ENCODE measurements at regions of chr3 and their contacts with region 1.

Region 1: GRCh38 chr3:142993958-142994442 is 7.4 kb upstream of the U2SURP start:
- DNase-seq: peak; percentile 69 to 78
- ATAC-seq: peak; percentile 54 to 90; a peak in 5 of 6 replicates
- H3K4me3 ChIP-seq: no peak overlapping the region
- H3K27ac ChIP-seq: no peak overlapping the region
- H3K4me1 ChIP-seq: peaks cover 10% of the 10 kb centered on the region; the same call in 2 of the 3 replicates
- CTCF ChIP-seq: peak; percentile 95
- EP300 ChIP-seq: no peak
- POLR2A ChIP-seq: no peak
- RAD21 ChIP-seq: peak; percentile 93 to 94

Region 2: DNA sequence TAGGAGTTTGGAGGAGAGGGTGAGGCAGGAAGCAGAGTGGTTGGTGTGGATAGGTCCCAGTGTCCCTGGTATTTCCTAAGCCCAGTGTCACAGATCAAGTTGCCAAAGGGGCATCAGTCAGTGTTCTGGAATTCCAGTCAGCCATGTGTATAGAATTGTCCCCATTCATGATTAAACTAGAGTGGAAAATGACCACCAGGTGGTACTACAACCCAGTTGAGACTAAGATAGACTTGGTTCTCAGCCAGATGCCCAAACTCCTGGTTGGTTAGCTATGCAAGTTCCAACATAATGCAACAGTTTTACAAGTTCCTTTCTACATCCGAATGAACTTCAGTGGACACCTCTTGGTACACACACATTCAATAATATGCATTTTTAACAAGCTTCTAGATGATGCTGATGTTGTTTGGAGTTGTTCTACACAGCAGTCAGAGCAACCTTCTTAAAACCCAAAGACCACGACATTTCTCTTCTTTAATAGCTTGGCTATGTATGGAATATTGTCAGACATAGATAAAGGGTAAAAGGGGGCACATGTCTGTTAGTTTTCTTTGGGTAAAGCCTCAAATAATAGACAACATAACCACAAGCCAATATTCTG is 407.1 kb before region 1 on chr3:
- CTCF ChIA-PET with region 1: interaction called, 20 read pairs
- POLR2A ChIA-PET with region 1: no interaction called
- DNase-seq: peak; percentile 84
- ATAC-seq: peak; percentile 95 to 96
- H3K4me3 ChIP-seq: no peak overlapping the region
- H3K27ac ChIP-seq: no peak overlapping the region
- H3K4me1 ChIP-seq: peaks cover 7% of the 10 kb centered on the region; the same call in 2 of the 3 replicates
- CTCF ChIP-seq: peak; percentile 94
- EP300 ChIP-seq: no peak
- POLR2A ChIP-seq: no peak
- RAD21 ChIP-seq: peak; percentile 95 to 97

Region 3: GRCh38 chr3:142929109-142929508 is 64.9 kb before region 1 on chr3:
- CTCF ChIA-PET with region 1: interaction called, 11 read pairs
- POLR2A ChIA-PET with region 1: no interaction called
- DNase-seq: peak; percentile 78 to 82
- ATAC-seq: peak; percentile 87 to 92
- H3K4me3 ChIP-seq: no peak overlapping the region
- H3K27ac ChIP-seq: no peak overlapping the region
- H3K4me1 ChIP-seq: no peaks in the 10 kb centered on the region; the same call in 2 of the 3 replicates
- CTCF ChIP-seq: peak; percentile 87
- EP300 ChIP-seq: no peak
- POLR2A ChIP-seq: no peak
- RAD21 ChIP-seq: peak; percentile 72 to 76